Caco-2 (cell line): ENCODE measurements at regions of chr10 and their contacts with region 1.

Region 1: GRCh38 chr10:78588194-78588811 is 480.5 kb upstream of the ZMIZ1 start:
- DNase-seq: peak; percentile 86 to 94
- H3K4me3 ChIP-seq: no peak overlapping the region
- H3K4me3 Mint-ChIP-seq: peak overlapping the region; percentile 43
- H3K27ac Mint-ChIP-seq: peak overlapping the region; percentile 94
- H3K4me1 ChIP-seq: peaks cover 71% of the 10 kb centered on the region
- H3K4me1 Mint-ChIP-seq: peaks cover 53% of the 10 kb centered on the region
- H3K27me3 ChIP-seq: no peaks in the 10 kb centered on the region
- H3K27me3 Mint-ChIP-seq: no peaks in the 10 kb centered on the region
- CTCF ChIP-seq: no peak

Region 2: GRCh38 chr10:78109210-78109609 is 479.1 kb before region 1 on chr10:
- CTCF ChIA-PET with region 1: no interaction called
- POLR2A ChIA-PET with region 1: no interaction called
- intact Hi-C with region 1: no loop called
- DNase-seq: no peak
- H3K4me3 ChIP-seq: no peak overlapping the region
- H3K4me3 Mint-ChIP-seq: no peak overlapping the region
- H3K27ac Mint-ChIP-seq: no peak overlapping the region
- H3K4me1 ChIP-seq: no peaks in the 10 kb centered on the region
- H3K4me1 Mint-ChIP-seq: no peaks in the 10 kb centered on the region
- H3K27me3 ChIP-seq: no peaks in the 10 kb centered on the region
- H3K27me3 Mint-ChIP-seq: peaks cover 7% of the 10 kb centered on the region
- CTCF ChIP-seq: peak in 1 of 2 experiments; percentile 9

Region 3: GRCh38 chr10:78302989-78303854 is 285.1 kb before region 1 on chr10:
- CTCF ChIA-PET with region 1: no interaction called
- POLR2A ChIA-PET with region 1: no interaction called
- intact Hi-C with region 1: loop called (anchors 2 kb)
- DNase-seq: peak; percentile 94 to 98
- H3K4me3 ChIP-seq: peak overlapping the region; percentile 69
- H3K4me3 Mint-ChIP-seq: peak overlapping the region; percentile 95
- H3K27ac Mint-ChIP-seq: peak overlapping the region; percentile 95
- H3K4me1 ChIP-seq: peaks cover 17% of the 10 kb centered on the region
- H3K4me1 Mint-ChIP-seq: peaks cover 13% of the 10 kb centered on the region
- H3K27me3 ChIP-seq: no peaks in the 10 kb centered on the region
- H3K27me3 Mint-ChIP-seq: peaks cover 15% of the 10 kb centered on the region
- CTCF ChIP-seq: peak; percentile 70 to 85

Region 4: GRCh38 chr10:78458983-78459638 is 129.2 kb before region 1 on chr10:
- CTCF ChIA-PET with region 1: no interaction called
- POLR2A ChIA-PET with region 1: no interaction called
- intact Hi-C with region 1: loop called (anchors 1 kb)
- DNase-seq: peak; percentile 75 to 81
- H3K4me3 ChIP-seq: no peak overlapping the region
- H3K4me3 Mint-ChIP-seq: peak overlapping the region; percentile 37
- H3K27ac Mint-ChIP-seq: peak overlapping the region; percentile 61
- H3K4me1 ChIP-seq: peaks cover 43% of the 10 kb centered on the region
- H3K4me1 Mint-ChIP-seq: peaks cover 31% of the 10 kb centered on the region
- H3K27me3 ChIP-seq: no peaks in the 10 kb centered on the region
- H3K27me3 Mint-ChIP-seq: no peaks in the 10 kb centered on the region
- CTCF ChIP-seq: no peak

Region 5: GRCh38 chr10:78535716-78536218 is 52.5 kb before region 1 on chr10:
- CTCF ChIA-PET with region 1: no interaction called
- POLR2A ChIA-PET with region 1: no interaction called
- intact Hi-C with region 1: loop called (anchors 1 kb)
- DNase-seq: peak; percentile 59 to 76
- H3K4me3 ChIP-seq: no peak overlapping the region
- H3K4me3 Mint-ChIP-seq: no peak overlapping the region
- H3K27ac Mint-ChIP-seq: peak overlapping the region; percentile 36
- H3K4me1 ChIP-seq: peaks cover 36% of the 10 kb centered on the region
- H3K4me1 Mint-ChIP-seq: peaks cover 19% of the 10 kb centered on the region
- H3K27me3 ChIP-seq: no peaks in the 10 kb centered on the region
- H3K27me3 Mint-ChIP-seq: no peaks in the 10 kb centered on the region
- CTCF ChIP-seq: no peak

Region 6: GRCh38 chr10:78657163-78657861 is 69.0 kb after region 1 on chr10:
- CTCF ChIA-PET with region 1: no interaction called
- POLR2A ChIA-PET with region 1: no interaction called
- intact Hi-C with region 1: loop called (anchors 2 kb)
- DNase-seq: peak; percentile 69 to 78
- H3K4me3 ChIP-seq: no peak overlapping the region
- H3K4me3 Mint-ChIP-seq: no peak overlapping the region
- H3K27ac Mint-ChIP-seq: no peak overlapping the region
- H3K4me1 ChIP-seq: no peaks in the 10 kb centered on the region
- H3K4me1 Mint-ChIP-seq: no peaks in the 10 kb centered on the region
- H3K27me3 ChIP-seq: no peaks in the 10 kb centered on the region
- H3K27me3 Mint-ChIP-seq: no peaks in the 10 kb centered on the region
- CTCF ChIP-seq: peak; percentile 70 to 79

Region 7: GRCh38 chr10:78972947-78973900 is 384.9 kb after region 1 on chr10:
- CTCF ChIA-PET with region 1: interaction called, 3 read pairs
- POLR2A ChIA-PET with region 1: interaction called, 7 read pairs
- intact Hi-C with region 1: loop called (anchors 2 kb)
- DNase-seq: peak; percentile 83 to 86
- H3K4me3 ChIP-seq: peak overlapping the region; percentile 44
- H3K4me3 Mint-ChIP-seq: peak overlapping the region; percentile 84
- H3K27ac Mint-ChIP-seq: peak overlapping the region; percentile 89
- H3K4me1 ChIP-seq: peaks cover 23% of the 10 kb centered on the region
- H3K4me1 Mint-ChIP-seq: peaks cover 16% of the 10 kb centered on the region
- H3K27me3 ChIP-seq: no peaks in the 10 kb centered on the region
- H3K27me3 Mint-ChIP-seq: no peaks in the 10 kb centered on the region
- CTCF ChIP-seq: no peak